ENCODE measurements at regions of chr13 and their contacts with region 1.

Region 1: DNA sequence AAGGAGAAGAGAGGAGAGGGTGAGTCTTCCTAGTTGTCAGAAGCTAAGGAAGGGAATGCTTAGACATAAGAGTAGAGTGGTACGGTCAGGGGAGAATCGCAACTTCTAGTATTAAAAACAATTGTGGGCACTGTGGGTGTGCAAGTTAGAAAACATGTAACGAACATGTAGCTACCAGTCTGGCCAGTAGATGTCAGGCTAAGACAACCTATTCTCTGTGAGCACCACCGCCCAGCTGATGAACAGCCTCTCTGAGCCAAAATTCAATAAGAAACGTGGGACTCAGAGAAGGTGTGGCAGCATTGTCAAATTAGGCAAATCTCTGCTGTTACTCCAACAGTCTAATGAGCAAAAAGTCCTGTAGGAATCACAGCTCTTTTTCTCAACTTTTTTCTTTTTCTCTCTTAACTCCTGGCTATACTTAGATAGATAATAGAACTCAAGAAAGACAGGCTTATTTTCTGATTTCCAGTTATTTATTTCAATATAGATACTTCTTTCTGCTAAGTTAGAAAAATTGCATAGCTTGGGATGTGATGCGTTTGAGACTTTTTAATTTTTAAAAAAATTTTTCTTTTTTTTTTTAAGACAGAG is 186.2 kb downstream of the USP12 start:
- DNase-seq: peak in 6 of 10 donors; percentile 52 to 85 (median 72)
- H3K4me3 ChIP-seq: peak overlapping the region in 1 of 59 donors; percentile 12
- H3K27ac ChIP-seq: peak overlapping the region in 2 of 59 donors; percentile 0 to 52
- H3K27me3 ChIP-seq: no peaks in the 10 kb centered on the region
- CTCF ChIP-seq: peak in 55 of 56 donors; percentile 50 to 99 (median 90)

Region 2: DNA sequence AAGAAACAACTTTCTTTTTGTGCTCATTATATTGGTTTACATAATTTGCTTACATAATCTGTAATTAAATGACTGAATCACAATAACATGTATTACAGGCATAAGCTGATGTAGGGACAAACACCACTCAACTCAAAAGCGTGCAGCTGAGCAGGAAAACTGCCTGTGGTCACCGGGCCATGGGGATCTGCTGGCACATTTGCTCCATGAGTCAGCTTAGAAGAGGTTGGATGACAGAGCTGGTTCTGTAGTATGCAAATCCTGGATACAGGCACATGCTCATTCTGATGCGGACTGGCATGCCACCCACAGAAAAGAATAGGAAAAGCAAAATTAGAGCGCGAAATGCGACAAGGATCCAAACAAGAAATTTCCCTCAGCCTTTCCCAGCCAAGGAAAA is 57.6 kb after region 1 on chr13:
- intact Hi-C with region 1: loop called (anchors 2 to 5 kb)
- DNase-seq: peak; percentile 37 to 88 (median 80)
- H3K4me3 ChIP-seq: peak overlapping the region in 5 of 59 donors; percentile 3 to 25 (median 16)
- H3K27ac ChIP-seq: peak overlapping the region in 47 of 59 donors; percentile 0 to 81 (median 54)
- H3K27me3 ChIP-seq: no peaks in the 10 kb centered on the region
- CTCF ChIP-seq: peak in 50 of 56 donors; percentile 13 to 76 (median 44)

Region 3: DNA sequence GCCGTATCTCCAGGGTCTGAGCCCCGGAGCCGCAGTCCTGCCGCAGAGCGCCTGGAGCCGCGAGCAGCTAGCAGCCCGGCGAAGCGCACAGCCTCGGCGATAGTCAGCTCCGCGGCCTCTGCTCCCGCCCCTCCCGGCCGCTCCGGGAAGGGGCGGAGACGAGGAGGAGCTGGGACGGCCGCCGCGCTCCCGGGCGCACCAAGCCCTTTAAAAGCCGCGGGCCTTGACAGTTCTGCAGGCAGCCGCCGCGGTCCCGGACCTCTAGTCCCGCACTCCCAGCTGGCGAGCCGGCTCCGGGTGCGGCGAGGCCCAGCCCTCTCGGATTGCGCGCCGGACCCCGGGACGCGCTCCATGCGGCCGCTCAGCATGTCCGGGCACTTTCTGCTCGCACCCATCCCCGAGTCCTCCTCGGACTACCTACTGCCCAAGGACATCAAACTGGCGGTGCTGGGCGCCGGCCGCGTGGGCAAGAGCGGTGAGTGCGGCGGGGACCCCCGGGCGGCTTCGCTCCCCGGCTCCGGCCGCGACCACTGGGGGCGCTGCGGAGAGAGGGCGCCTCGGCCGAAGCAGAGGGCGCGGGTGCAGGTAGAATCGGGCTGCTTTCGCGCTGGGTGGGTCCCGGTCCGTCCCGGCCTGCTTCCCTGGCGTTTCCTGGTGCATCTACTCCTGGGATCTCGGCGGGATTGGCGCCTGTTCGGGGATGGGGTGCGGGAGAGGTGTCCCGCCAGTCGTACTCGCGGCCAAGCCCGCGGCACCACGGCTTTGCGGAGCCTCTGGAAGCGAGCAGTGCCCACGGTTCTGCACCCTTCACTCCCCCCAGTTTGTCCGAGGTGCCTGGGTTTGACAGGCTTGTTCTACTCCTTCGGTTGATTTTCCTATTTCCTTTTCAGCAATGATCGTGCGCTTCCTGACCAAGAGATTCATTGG is 285.5 kb after region 1 on chr13 and contains the start of gene RASL11A:
- intact Hi-C with region 1: loop called in 1 of 2 experiments (anchors 10 kb)
- DNase-seq: peak; percentile 71 to 90 (median 83)
- H3K4me3 ChIP-seq: peak within 1 kb of the TSS; percentile 63 to 96 (median 89)
- H3K27ac ChIP-seq: peak within 1 kb of the TSS; percentile 32 to 97 (median 91)
- H3K27me3 ChIP-seq: no peaks in the 10 kb centered on the region
- CTCF ChIP-seq: peak in 55 of 56 donors; percentile 71 to 97 (median 89)
- total RNA-seq, gene RASL11A: 1.2 to 14.3 (median 5.2) TPM

Region 4: GRCh38 chr13:27826379-27827353 is 841.3 kb after region 1 on chr13:
- intact Hi-C with region 1: loop called (anchors 5 to 10 kb)
- DNase-seq: peak; percentile 65 to 87 (median 80)
- H3K4me3 ChIP-seq: peak overlapping the region in 44 of 59 donors; percentile 4 to 65 (median 38)
- H3K27ac ChIP-seq: no peak overlapping the region
- H3K27me3 ChIP-seq: peaks cover 8 to 88% (median 65%) of the 10 kb centered on the region in 45 donors
- CTCF ChIP-seq: peak; percentile 86 to 99 (median 98)

Measured in dorsolateral prefrontal cortex (tissue), 120 donors.